Activated T-helper 2 cell treated with anti-CD3 and anti-CD28 coated beads, Interferon-gamma antibody, Interleukin-2, Interleukin-4, amounts not matched to agents 10 μg/mL and 5 μg/mL and 100 μg/mL, durations not matched to agents 14 hours and 24 hours and 36 hours (primary cell): ENCODE measurements at regions of chr1 and their contacts with region 1.

Region 1: DNA sequence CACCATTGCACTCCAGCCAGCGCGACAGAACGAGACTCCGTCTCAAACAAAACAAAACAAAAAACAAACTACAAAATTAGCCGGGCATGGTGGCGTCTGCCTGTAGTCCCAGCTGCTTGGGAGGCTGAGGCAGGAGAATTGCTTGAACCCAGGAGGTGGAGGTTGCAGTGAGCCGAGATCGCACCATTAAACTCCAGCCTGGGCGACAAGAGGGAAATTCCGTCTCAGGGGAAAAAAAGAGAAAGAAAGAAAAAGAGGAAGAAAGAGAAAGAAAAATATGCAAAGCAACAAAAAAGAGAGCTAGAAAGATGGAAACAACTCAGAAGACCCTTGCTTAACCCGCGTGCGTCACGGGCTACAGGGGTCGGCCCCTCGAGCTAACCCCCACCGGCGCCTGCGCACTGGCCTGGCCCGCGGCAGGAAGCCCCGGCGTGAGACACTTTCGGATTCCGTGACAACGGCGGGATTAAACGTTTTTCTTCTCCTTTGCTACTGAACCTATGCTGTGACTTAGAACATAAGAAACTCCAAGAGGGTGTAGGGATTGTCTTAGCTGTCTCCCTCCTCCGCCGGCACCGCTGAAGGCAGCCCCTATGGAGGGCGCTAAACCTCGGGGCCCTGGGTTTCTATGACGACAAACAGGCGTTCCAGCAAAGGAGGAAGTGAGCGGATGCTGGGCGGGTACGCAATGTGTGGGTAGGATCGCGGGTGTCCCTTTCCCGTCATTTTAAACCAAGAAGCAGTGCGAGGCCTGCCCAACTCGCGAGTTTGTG is at the start of gene AXDND1:
- DNase-seq: peak; percentile 86
- H3K4me3 Mint-ChIP-seq: peak within 1 kb of the TSS; percentile 84
- H3K27ac Mint-ChIP-seq: peak within 1 kb of the TSS; percentile 100
- H3K4me1 Mint-ChIP-seq: peaks cover 8% of the 10 kb centered on the region
- H3K27me3 Mint-ChIP-seq: peaks cover 4% of the 10 kb centered on the region
- total RNA-seq, gene AXDND1: 0.62 TPM in 1 of 2 replicates, not detected in the other

Region 2: GRCh38 chr1:178774263-178774662 is 591.2 kb before region 1 on chr1:
- intact Hi-C with region 1: loop called (anchors 2 kb)
- DNase-seq: no peak
- H3K4me3 Mint-ChIP-seq: no peak overlapping the region
- H3K27ac Mint-ChIP-seq: no peak overlapping the region
- H3K4me1 Mint-ChIP-seq: no peaks in the 10 kb centered on the region
- H3K27me3 Mint-ChIP-seq: no peaks in the 10 kb centered on the region

Region 3: GRCh38 chr1:179081687-179082332 is 283.7 kb before region 1 on chr1 and contains the start of gene TOR3A:
- intact Hi-C with region 1: loop called (anchors 1 kb)
- DNase-seq: peak; percentile 75
- H3K4me3 Mint-ChIP-seq: peak within 1 kb of the TSS; percentile 97
- H3K27ac Mint-ChIP-seq: peak within 1 kb of the TSS; percentile 96
- H3K4me1 Mint-ChIP-seq: peaks cover 20% of the 10 kb centered on the region
- H3K27me3 Mint-ChIP-seq: no peaks in the 10 kb centered on the region
- total RNA-seq, gene TOR3A: 34.1 and 35.3 TPM in 2 replicates

Region 4: DNA sequence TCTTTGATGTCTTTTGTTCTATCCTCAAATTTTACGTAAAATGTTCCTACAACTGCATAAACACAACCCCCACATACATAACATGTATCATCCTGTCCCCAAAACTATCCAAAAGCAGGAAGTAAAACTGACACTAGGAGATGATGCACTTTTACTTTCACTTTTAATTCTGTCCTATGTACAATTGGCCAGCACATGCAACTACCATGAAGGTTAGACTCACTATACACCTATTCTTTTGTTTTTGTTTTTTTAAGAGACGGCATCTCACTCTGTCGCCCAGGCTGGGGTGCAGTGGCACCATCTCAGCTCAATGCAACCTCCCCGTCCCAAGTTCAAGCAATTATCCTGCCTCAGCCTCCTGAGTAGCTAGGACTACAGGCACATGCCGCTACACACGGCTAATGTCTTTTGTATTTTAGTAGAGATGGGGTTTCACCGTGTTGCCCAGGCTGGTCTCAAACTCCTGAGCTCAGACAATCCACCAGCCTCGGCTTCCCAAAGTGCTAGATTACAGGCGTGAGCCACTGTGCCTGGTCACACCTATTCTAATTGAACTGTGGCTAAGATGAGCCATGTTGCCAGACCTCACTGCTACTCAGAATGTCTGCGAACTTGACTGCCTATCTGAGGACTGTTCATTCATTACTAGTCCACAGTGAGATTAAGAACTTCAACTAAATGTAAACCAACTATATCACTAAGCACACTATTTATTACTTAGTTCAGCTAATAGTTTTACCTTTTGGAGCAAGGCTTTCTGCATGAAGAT is 235.6 kb before region 1 on chr1:
- intact Hi-C with region 1: loop called (anchors 2 kb)
- DNase-seq: peak; percentile 23
- H3K4me3 Mint-ChIP-seq: peak overlapping the region; percentile 72
- H3K27ac Mint-ChIP-seq: peak overlapping the region; percentile 93
- H3K4me1 Mint-ChIP-seq: peaks cover 13% of the 10 kb centered on the region
- H3K27me3 Mint-ChIP-seq: no peaks in the 10 kb centered on the region

Region 5: GRCh38 chr1:179229214-179230140 is 136.0 kb before region 1 on chr1 and contains the start of gene ABL2:
- intact Hi-C with region 1: loop called (anchors 1 kb)
- DNase-seq: peak; percentile 34
- H3K4me3 Mint-ChIP-seq: peak within 1 kb of the TSS; percentile 91
- H3K27ac Mint-ChIP-seq: peak within 1 kb of the TSS; percentile 79
- H3K4me1 Mint-ChIP-seq: peaks cover 24% of the 10 kb centered on the region
- H3K27me3 Mint-ChIP-seq: peaks cover 8% of the 10 kb centered on the region
- total RNA-seq, gene ABL2: 7.7 and 8.5 TPM in 2 replicates

Region 6: GRCh38 chr1:179293340-179294327 is 71.9 kb before region 1 on chr1 and contains the start of gene SOAT1:
- intact Hi-C with region 1: loop called (anchors 1 kb)
- DNase-seq: peak; percentile 89
- H3K4me3 Mint-ChIP-seq: peak within 1 kb of the TSS; percentile 94
- H3K27ac Mint-ChIP-seq: peak within 1 kb of the TSS; percentile 86
- H3K4me1 Mint-ChIP-seq: peaks cover 34% of the 10 kb centered on the region
- H3K27me3 Mint-ChIP-seq: no peaks in the 10 kb centered on the region
- total RNA-seq, gene SOAT1: 39.2 and 40.3 TPM in 2 replicates